Psoas muscle (tissue), 8 donors: ENCODE measurements at regions of chr1 and their contacts with region 1.

Region 1: GRCh38 chr1:201184307-201185122 is 6.1 kb upstream of the IGFN1 start:
- DNase-seq: peak; percentile 48 to 66
- ATAC-seq: peak; percentile 92 to 97 (median 94)
- H3K4me3 ChIP-seq: no peak overlapping the region
- H3K27ac ChIP-seq: peak overlapping the region; percentile 78
- H3K4me1 ChIP-seq: peaks cover 50% of the 10 kb centered on the region
- H3K27me3 ChIP-seq: no peaks in the 10 kb centered on the region
- CTCF ChIP-seq: no peak

Region 2: GRCh38 chr1:201114236-201115131 is 70.0 kb before region 1 on chr1:
- intact Hi-C with region 1: no loop called
- DNase-seq: peak; percentile 89 to 90
- ATAC-seq: peak; percentile 84 to 89 (median 88)
- H3K4me3 ChIP-seq: peak overlapping the region; percentile 78
- H3K27ac ChIP-seq: peak overlapping the region; percentile 95
- H3K4me1 ChIP-seq: peaks cover 19% of the 10 kb centered on the region
- H3K27me3 ChIP-seq: no peaks in the 10 kb centered on the region
- CTCF ChIP-seq: peak; percentile 85

Region 3: DNA sequence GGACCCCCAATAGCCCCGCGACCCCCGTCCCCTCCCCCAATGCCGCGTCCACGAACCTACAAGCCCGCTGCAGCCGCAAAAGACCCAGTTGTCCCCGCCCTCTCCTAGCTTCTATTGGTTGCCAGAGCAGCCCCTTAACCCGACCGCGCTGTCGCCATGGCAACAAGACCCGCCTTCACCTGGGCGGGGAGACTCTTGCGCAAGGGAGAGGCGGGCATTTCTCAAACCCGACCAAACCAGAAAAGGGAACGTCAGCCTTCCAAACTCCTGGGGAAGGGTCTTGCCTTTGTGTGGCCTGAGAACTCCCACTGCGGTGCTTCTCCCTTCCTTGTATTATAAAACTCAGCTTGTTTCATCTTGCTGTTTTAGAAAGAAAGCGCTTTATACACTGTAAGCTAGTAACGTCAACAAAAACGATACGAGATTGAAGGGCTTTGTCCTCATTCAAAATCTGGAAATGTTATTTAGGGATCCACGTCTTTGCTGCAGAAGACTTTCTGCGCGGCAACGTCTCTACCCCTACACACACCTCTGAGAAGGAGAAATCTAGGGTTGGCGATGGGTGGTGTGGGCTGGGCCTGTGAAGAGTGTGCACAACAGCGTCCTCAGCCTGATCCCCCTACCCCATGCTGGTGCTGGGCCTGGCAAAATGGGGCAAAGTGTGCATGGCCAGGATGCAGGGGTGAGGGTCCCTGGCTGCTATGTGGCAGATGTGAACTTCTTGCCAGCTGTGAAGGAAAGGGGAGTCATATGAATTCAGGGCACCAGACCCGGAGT is 29.9 kb before region 1 on chr1 and contains the start of gene TMEM9:
- intact Hi-C with region 1: loop called in 1 of 2 experiments (anchors 5 kb)
- DNase-seq: peak; percentile 96 to 98
- ATAC-seq: peak; percentile 93 to 98 (median 96)
- H3K4me3 ChIP-seq: peak within 1 kb of the TSS; percentile 85
- H3K27ac ChIP-seq: peak within 1 kb of the TSS; percentile 73
- H3K4me1 ChIP-seq: peaks cover 29% of the 10 kb centered on the region
- H3K27me3 ChIP-seq: no peaks in the 10 kb centered on the region
- CTCF ChIP-seq: no peak
- total RNA-seq, gene TMEM9: 11.9 to 46.3 (median 32.3) TPM

Region 4: GRCh38 chr1:201164645-201165044 is 19.9 kb before region 1 on chr1:
- intact Hi-C with region 1: no loop called
- DNase-seq: no peak
- ATAC-seq: peak in 1 of 4 donors; percentile 55
- H3K4me3 ChIP-seq: no peak overlapping the region
- H3K27ac ChIP-seq: peak overlapping the region; percentile 30
- H3K4me1 ChIP-seq: peaks cover 21% of the 10 kb centered on the region
- H3K27me3 ChIP-seq: no peaks in the 10 kb centered on the region
- CTCF ChIP-seq: no peak

Region 5: DNA sequence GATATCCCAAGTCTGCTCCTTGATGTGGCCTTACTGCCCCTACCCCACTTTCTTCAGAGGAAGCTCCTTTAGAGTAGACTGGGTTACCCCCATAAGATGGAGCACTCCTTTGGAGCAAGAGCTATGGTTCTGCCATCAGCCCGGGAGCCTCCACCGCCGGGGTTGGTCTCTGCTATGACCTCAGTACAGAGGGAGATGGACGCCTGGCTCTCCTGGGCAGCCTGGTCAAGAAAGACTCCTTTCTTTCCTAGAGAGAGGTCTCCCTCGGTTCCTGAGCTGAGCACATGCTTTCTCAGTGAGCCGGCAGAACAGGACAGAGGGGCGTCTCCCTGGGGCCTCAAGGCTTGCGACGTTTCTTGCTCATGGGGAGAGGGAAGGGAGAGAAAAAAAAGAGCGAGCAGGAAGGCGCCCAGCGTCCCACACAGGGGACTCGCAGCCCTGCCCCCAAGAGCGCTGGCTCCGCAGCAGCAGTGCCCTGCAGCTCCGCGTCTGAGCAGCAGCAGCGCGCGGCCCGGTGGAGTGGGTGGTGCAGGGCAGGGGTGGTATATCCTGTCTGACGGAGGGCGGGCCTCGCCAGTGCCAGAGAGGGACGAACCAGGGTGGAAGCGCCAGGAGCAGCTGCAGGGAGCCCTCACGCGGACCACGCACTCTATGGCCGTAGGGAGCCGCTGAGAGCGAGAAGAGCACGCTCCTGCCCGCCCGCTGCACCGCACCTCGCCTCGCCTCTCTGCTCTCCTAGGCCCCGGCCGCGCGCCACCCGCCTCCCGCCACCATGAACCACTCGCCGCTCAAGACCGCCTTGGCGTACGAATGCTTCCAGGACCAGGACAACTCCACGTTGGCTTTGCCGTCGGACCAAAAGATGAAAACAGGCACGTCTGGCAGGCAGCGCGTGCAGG is 98.7 kb after region 1 on chr1 and contains the start of gene PKP1:
- intact Hi-C with region 1: no loop called
- DNase-seq: peak; percentile 44 to 64
- ATAC-seq: peak; percentile 65 to 76 (median 70)
- H3K4me3 ChIP-seq: peak within 1 kb of the TSS; percentile 41
- H3K27ac ChIP-seq: peak within 1 kb of the TSS; percentile 16
- H3K4me1 ChIP-seq: no peaks in the 10 kb centered on the region
- H3K27me3 ChIP-seq: peaks cover 0 to 35% (median 10%) of the 10 kb centered on the region in 3 donors
- CTCF ChIP-seq: no peak
- total RNA-seq, gene PKP1: 1.2 to 6.7 (median 3.3) TPM

Region 6: GRCh38 chr1:201311356-201312011 is 127.0 kb after region 1 on chr1:
- intact Hi-C with region 1: no loop called
- DNase-seq: no peak
- ATAC-seq: no peak
- H3K4me3 ChIP-seq: no peak overlapping the region
- H3K27ac ChIP-seq: peak overlapping the region; percentile 41
- H3K4me1 ChIP-seq: peaks cover 6% of the 10 kb centered on the region
- H3K27me3 ChIP-seq: peaks cover 0 to 12% (median 0%) of the 10 kb centered on the region in 3 donors
- CTCF ChIP-seq: no peak